ENCODE measurements at regions of chr15 and their contacts with region 1.

Region 1: DNA sequence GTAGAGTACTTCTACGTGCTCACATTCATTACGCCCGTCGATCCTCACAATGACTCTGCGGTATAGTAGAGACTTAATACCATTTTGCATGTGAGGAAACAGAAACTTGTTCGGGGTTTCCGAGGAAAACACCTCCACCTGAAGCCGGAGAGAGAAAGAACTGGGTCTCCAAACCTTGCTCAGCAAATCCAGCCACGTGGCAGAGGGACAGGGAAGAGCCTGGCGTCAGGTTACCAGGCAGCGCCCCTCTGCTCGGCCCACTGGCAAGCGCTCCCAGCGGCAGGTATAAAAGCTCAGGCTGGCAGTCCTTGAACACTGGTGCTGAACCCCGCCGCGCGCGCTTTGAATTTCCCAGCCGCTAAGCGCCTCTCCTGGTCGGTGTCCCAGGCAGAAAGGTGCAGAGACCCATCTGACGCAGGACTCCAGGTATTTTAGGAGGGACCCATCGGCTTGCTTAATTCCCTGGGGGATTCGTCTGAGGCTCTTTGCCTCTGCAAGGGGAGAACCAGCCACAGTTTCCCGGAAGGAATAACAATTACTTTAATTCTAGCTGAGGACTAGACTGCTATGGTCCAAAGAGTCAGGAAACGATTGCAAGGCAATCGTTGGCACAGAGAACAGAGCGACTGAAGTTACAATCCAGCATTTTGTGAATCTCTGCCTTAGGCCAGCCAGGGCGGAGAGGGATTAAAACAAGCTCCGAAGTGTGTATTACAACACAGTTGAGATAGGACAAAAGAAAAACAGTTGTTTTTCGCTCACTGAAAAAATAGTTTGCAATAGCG is at the start of gene C2CD4A:
- DNase-seq: peak; percentile 54 to 72 (median 58)
- H3K4me3 ChIP-seq: peak within 1 kb of the TSS; percentile 18 to 57
- H3K4me3 Mint-ChIP-seq: peak within 1 kb of the TSS; percentile 88 to 97 (median 92)
- H3K27ac ChIP-seq: no peak within 1 kb of the TSS
- H3K27ac Mint-ChIP-seq: peak within 1 kb of the TSS in 6 of 7 donors; percentile 26 to 78 (median 66)
- H3K4me1 ChIP-seq: peaks cover 23% of the 10 kb centered on the region
- H3K4me1 Mint-ChIP-seq: peaks cover 18 to 31% (median 24%) of the 10 kb centered on the region in 4 donors
- H3K27me3 ChIP-seq: no peaks in the 10 kb centered on the region
- H3K27me3 Mint-ChIP-seq: peaks cover 3 to 8% of the 10 kb centered on the region in 2 donors
- total RNA-seq, gene C2CD4A: 0.11 TPM in 1 of 2 experiments, not detected in the other

Region 2: DNA sequence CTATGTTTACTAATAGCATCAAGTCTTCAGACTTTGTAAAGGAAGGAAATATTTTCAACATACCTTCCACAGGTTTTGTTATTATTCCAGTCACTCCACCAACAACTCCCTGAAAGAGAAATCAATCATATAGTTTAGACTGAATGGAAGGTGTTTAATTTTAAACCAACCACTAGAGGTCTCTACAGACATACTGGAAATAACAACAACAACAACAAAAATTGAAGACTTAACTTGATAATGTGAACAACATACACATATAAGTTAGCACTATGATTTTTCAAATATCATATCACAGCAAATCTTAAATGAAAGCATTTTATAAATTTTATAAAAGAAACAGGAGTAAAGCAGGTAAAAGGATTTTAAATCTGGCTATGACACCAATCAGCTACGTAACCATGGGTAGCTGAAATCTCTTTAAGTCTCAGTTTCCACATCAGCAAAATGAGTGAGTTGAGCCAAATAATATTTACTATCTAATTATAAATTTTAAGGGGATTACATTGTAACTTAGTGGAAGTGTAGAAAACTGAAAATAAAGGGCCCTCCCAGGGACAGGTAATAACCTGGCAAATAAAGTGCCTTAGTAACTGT is 194.8 kb before region 1 on chr15:
- CTCF ChIA-PET with region 1: interaction called, 14 read pairs
- POLR2A ChIA-PET with region 1: no interaction called
- intact Hi-C with region 1: loop called (anchors 1 kb)
- DNase-seq: peak in 1 of 5 donors; percentile 17
- H3K4me3 ChIP-seq: no peak overlapping the region
- H3K4me3 Mint-ChIP-seq: no peak overlapping the region
- H3K27ac ChIP-seq: no peak overlapping the region
- H3K27ac Mint-ChIP-seq: peak overlapping the region in 1 of 7 donors; percentile 1
- H3K4me1 ChIP-seq: no peaks in the 10 kb centered on the region
- H3K4me1 Mint-ChIP-seq: peaks cover 0 to 2% (median 0%) of the 10 kb centered on the region in 4 donors
- H3K27me3 ChIP-seq: no peaks in the 10 kb centered on the region
- H3K27me3 Mint-ChIP-seq: no peaks in the 10 kb centered on the region

Region 3: DNA sequence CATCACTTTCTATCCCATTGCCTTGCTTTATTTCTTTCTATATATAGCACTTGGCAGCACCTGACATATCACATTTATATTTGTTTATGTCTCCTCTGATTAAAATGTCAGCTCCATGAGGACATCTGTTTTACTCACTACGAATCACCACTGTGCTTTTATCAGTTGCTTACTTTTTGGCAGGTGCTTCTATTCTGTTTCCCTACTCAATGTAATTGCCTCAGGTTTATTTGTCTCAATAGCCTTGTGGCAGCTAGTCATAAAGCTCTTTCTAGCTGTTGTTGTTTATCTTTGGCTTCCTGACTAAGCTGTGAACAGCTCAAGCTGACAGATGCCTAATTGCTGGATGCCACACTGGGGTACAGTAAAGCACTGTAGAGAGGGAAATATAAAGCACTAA is 92.1 kb before region 1 on chr15:
- CTCF ChIA-PET with region 1: interaction called, 3 read pairs
- POLR2A ChIA-PET with region 1: no interaction called
- intact Hi-C with region 1: loop called (anchors 5 kb)
- DNase-seq: no peak
- H3K4me3 ChIP-seq: no peak overlapping the region
- H3K4me3 Mint-ChIP-seq: no peak overlapping the region
- H3K27ac ChIP-seq: no peak overlapping the region
- H3K27ac Mint-ChIP-seq: peak overlapping the region in 4 of 7 donors; percentile 32 to 51 (median 43)
- H3K4me1 ChIP-seq: no peaks in the 10 kb centered on the region
- H3K4me1 Mint-ChIP-seq: peaks cover 4 to 16% (median 11%) of the 10 kb centered on the region in 4 donors
- H3K27me3 ChIP-seq: no peaks in the 10 kb centered on the region
- H3K27me3 Mint-ChIP-seq: no peaks in the 10 kb centered on the region

Region 4: DNA sequence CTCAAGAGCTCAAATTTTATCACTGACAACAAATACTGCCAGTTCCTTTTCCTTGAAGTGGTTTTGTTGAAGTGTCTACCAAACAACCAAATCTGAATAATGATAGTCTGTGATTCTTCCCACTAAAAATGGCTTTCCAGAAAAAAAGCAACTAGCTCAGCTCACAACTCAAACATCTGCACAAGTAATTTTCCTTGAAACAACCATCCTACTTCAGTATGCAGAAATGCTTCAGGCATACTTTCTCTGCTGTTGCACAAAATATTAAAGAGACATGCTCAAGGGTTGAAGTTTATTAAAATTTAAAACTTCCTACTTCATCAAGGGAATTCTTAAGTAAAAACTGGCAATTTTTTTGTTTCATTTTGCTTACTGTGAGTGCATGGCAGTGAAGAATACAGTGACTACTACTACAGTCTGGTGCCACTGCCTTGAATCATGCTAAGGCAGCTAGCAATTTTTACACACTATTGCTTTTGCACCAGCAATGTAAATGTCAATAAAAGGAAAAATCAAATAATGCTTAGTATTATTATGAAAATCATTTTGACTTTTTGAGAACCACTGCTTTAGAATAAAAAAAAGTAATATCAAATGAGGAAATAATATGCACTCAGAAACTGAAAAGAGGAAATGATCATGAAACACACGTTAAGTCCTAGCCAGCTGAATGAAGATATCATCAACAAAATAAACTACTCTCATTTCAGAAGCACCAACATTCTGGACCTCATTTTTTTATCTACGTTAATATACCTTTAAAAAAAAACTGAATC is 40.2 kb before region 1 on chr15:
- CTCF ChIA-PET with region 1: interaction called, 4 read pairs
- POLR2A ChIA-PET with region 1: no interaction called
- intact Hi-C with region 1: loop called (anchors 5 kb)
- DNase-seq: no peak
- H3K4me3 ChIP-seq: no peak overlapping the region
- H3K4me3 Mint-ChIP-seq: no peak overlapping the region
- H3K27ac ChIP-seq: no peak overlapping the region
- H3K27ac Mint-ChIP-seq: no peak overlapping the region
- H3K4me1 ChIP-seq: no peaks in the 10 kb centered on the region
- H3K4me1 Mint-ChIP-seq: peaks cover 4 to 8% (median 5%) of the 10 kb centered on the region in 4 donors
- H3K27me3 ChIP-seq: no peaks in the 10 kb centered on the region
- H3K27me3 Mint-ChIP-seq: no peaks in the 10 kb centered on the region

Region 5: DNA sequence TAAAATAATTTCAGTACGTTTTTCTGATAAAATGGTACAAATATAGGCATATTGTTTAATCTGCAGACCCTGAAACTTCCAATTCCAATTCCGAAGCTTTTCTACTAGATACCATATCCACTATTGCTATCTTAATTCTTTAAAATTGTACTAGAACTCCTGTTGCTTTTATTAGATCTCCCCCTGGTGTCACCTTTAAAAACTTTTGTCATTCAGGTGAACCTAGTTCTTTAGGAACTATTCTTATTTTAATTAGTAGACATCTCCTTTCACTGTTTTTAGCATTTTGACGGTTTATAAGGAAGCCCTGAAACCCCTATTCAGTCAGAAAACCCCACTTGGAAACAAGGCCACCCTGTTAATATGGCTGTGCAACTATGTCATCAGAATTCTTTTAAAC is 75.9 kb after region 1 on chr15:
- CTCF ChIA-PET with region 1: interaction called, 3 read pairs
- POLR2A ChIA-PET with region 1: no interaction called
- intact Hi-C with region 1: loop called (anchors 5 kb)
- DNase-seq: no peak
- H3K4me3 ChIP-seq: no peak overlapping the region
- H3K4me3 Mint-ChIP-seq: no peak overlapping the region
- H3K27ac ChIP-seq: no peak overlapping the region
- H3K27ac Mint-ChIP-seq: peak overlapping the region in 1 of 7 donors; percentile 26
- H3K4me1 ChIP-seq: no peaks in the 10 kb centered on the region
- H3K4me1 Mint-ChIP-seq: peaks cover 5 to 10% (median 6%) of the 10 kb centered on the region in 4 donors
- H3K27me3 ChIP-seq: no peaks in the 10 kb centered on the region
- H3K27me3 Mint-ChIP-seq: peaks cover 1 to 2% of the 10 kb centered on the region in 2 donors